Naive thymus-derived CD8-positive, alpha-beta T cell (primary cell): ENCODE measurements at regions of chr19 and their contacts with region 1.

Region 1: GRCh38 chr19:40777937-40778705 is at the start of gene RAB4B:
- DNase-seq: peak; percentile 99 to 100 (median 100)
- ATAC-seq: peak; percentile 85 to 86
- H3K4me3 Mint-ChIP-seq: peak within 1 kb of the TSS; percentile 88 to 97 (median 94)
- H3K27ac Mint-ChIP-seq: peak within 1 kb of the TSS; percentile 89 to 100 (median 98)
- H3K4me1 Mint-ChIP-seq: peaks cover 28 to 44% (median 42%) of the 10 kb centered on the region in 4 donors
- H3K27me3 Mint-ChIP-seq: peaks cover 0 to 2% (median 0%) of the 10 kb centered on the region in 5 donors
- polyA plus RNA-seq, gene RAB4B: 76.4 to 87.2 (median 87.1) TPM

Region 2: GRCh38 chr19:40662921-40663694 is 115.0 kb before region 1 on chr19:
- POLR2A ChIA-PET with region 1: interaction called, 13 read pairs
- DNase-seq: peak; percentile 81 to 98 (median 92)
- ATAC-seq: peak; percentile 91 to 92
- H3K4me3 Mint-ChIP-seq: peak overlapping the region; percentile 76 to 91 (median 84)
- H3K27ac Mint-ChIP-seq: peak overlapping the region; percentile 63 to 93 (median 90)
- H3K4me1 Mint-ChIP-seq: peaks cover 6 to 15% (median 8%) of the 10 kb centered on the region in 4 donors
- H3K27me3 Mint-ChIP-seq: no peaks in the 10 kb centered on the region

Region 3: GRCh38 chr19:40702337-40703012 is 75.6 kb before region 1 on chr19:
- POLR2A ChIA-PET with region 1: no interaction called
- DNase-seq: no peak
- ATAC-seq: no peak
- H3K4me3 Mint-ChIP-seq: no peak overlapping the region
- H3K27ac Mint-ChIP-seq: peak overlapping the region in 4 of 10 donors; percentile 1 to 74 (median 20)
- H3K4me1 Mint-ChIP-seq: peaks cover 0 to 2% (median under 1%) of the 10 kb centered on the region in 4 donors
- H3K27me3 Mint-ChIP-seq: no peaks in the 10 kb centered on the region

Region 4: DNA sequence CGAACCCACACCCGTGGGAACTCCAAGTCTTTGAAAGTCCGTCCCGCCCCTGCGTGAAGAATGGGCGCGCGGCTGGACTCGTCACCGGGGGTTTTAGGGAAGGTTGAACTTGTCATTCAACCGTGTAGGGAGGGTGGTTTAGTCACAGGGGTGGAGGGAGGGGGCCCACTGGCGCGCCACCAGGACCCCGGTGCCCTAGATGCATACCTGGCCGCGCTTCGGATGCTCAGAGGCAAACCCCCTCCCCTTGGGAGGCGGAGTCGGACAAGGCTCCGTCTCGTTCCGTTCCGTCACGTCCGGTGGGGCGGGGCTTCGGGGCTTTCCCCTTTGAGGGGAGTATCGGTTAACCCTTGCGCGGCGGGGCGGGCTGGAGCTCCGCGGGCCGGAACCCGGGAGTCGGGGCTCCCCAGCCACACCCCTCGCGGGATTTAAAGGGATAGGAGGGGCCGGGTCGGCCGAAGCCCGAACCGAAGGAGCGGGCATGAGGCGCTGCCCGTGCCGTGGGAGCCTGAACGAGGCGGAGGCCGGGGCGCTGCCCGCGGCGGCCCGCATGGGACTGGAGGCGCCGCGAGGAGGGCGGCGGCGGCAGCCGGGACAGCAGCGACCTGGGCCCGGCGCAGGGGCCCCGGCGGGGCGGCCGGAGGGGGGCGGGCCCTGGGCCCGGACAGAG is 61.3 kb before region 1 on chr19 and contains the starts of genes COQ8B and ITPKC:
- POLR2A ChIA-PET with region 1: interaction called, 18 read pairs
- DNase-seq: peak; percentile 99 to 100 (median 99)
- ATAC-seq: peak; percentile 58 to 72
- H3K4me3 Mint-ChIP-seq: peak within 1 kb of the TSS; percentile 80 to 98 (median 92)
- H3K27ac Mint-ChIP-seq: peak within 1 kb of the TSS; percentile 90 to 100 (median 98)
- H3K4me1 Mint-ChIP-seq: peaks cover 32 to 74% (median 70%) of the 10 kb centered on the region in 4 donors
- H3K27me3 Mint-ChIP-seq: no peaks in the 10 kb centered on the region
- polyA plus RNA-seq, gene COQ8B: 9.8 to 14.8 (median 13.3) TPM
- polyA plus RNA-seq, gene ITPKC: 2.9 to 5.7 (median 4.0) TPM

Region 5: DNA sequence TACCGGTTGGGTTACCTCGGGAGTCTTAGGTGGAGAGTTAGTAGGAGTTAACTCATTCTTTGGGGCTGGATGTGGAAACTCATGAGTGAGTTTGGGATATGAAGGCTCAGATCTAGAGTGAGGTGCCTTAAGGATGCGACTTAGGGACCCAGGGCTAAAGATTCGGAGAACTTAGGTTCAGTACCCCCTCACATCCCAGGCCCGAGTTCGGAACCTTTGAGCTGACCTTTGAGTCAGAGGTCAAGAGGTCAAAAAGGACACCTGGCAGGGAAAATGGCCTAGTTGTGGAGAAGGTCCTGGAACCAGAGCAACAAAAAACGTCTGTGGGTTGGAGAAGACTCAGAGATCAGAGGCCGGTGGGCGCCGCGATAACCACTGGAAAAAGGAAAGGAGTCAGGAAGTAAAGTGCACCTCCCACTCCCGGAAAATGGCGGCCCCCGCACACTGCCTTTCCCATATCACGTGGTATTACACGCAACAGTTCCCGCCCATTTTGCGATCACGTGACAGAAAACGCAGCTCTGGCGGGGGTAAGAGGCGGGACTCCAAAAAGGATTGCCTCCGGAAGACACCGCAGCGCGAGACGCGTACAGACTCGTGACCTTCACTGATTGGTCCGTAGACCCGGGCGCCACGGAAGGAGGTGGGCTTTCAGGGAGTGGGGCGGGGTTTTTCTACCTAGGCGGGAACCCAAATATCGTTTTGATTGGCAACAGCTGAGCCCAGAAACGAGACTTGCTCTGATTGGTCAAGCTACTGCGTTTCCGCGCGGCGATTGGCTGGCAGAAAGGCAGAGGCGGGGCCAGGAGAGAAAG is 27.9 kb before region 1 on chr19 and contains the start of gene ACTMAP:
- POLR2A ChIA-PET with region 1: interaction called, 115 read pairs
- DNase-seq: peak in 9 of 10 donors; percentile 94 to 100 (median 100)
- ATAC-seq: peak; percentile 87 to 90
- H3K4me3 Mint-ChIP-seq: peak within 1 kb of the TSS; percentile 91 to 100 (median 99)
- H3K27ac Mint-ChIP-seq: peak within 1 kb of the TSS; percentile 88 to 99 (median 99)
- H3K4me1 Mint-ChIP-seq: peaks cover 28 to 52% (median 47%) of the 10 kb centered on the region in 4 donors
- H3K27me3 Mint-ChIP-seq: no peaks in the 10 kb centered on the region
- polyA plus RNA-seq, gene ACTMAP: 2.5 to 4.6 (median 3.4) TPM

Region 6: GRCh38 chr19:40756502-40757110 is 21.5 kb before region 1 on chr19:
- POLR2A ChIA-PET with region 1: interaction called, 115 read pairs
- DNase-seq: peak in 2 of 10 donors; percentile 5 to 33
- ATAC-seq: peak in 1 of 2 donors; percentile 55
- H3K4me3 Mint-ChIP-seq: peak overlapping the region; percentile 16 to 91 (median 60)
- H3K27ac Mint-ChIP-seq: peak overlapping the region; percentile 21 to 91 (median 70)
- H3K4me1 Mint-ChIP-seq: peaks cover 23 to 75% (median 63%) of the 10 kb centered on the region in 4 donors
- H3K27me3 Mint-ChIP-seq: no peaks in the 10 kb centered on the region

Region 7: DNA sequence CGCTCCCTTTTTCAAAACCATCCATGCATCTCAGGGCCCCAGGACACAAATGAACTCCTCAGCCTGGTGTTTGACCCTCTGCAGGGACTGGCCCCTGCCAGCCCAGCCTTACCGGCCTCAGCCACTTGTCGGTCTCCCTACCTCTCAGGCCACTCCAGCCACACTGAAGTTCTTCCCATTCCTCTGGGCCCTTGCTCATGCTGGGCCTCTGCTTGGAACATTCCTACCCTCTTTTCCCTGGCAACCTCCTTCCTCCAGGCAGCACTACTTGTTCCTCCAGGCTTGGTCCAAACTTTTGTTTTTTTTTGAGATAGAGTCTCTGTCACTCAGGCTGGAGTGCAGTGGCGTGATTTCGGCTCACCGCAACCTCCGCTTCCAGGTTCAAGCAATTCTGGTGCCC is 13.2 kb after region 1 on chr19:
- POLR2A ChIA-PET with region 1: interaction called, 301 read pairs
- DNase-seq: no peak
- ATAC-seq: no peak
- H3K4me3 Mint-ChIP-seq: no peak overlapping the region
- H3K27ac Mint-ChIP-seq: peak overlapping the region in 6 of 10 donors; percentile 38 to 76 (median 62)
- H3K4me1 Mint-ChIP-seq: peaks cover 6 to 21% (median 13%) of the 10 kb centered on the region in 4 donors
- H3K27me3 Mint-ChIP-seq: no peaks in the 10 kb centered on the region

Region 8: GRCh38 chr19:40798223-40798996 is 20.3 kb after region 1 on chr19:
- POLR2A ChIA-PET with region 1: interaction called, 301 read pairs
- DNase-seq: peak; percentile 55 to 100 (median 100)
- ATAC-seq: peak; percentile 83 to 84
- H3K4me3 Mint-ChIP-seq: peak overlapping the region; percentile 88 to 99 (median 96)
- H3K27ac Mint-ChIP-seq: peak overlapping the region; percentile 98 to 100 (median 99)
- H3K4me1 Mint-ChIP-seq: peaks cover 34 to 56% (median 51%) of the 10 kb centered on the region in 4 donors
- H3K27me3 Mint-ChIP-seq: no peaks in the 10 kb centered on the region